Activated T-helper 1 cell treated with anti-CD3 and anti-CD28 coated beads, Interleukin-12 subunit alpha, Interleukin-12 subunit beta, Interleukin-2, Interleukin-4 antibody, amounts not matched to agents 30 ng/mL and 10 ng/mL and 1 ng/mL, durations not matched to agents 14 hours and 24 hours and 36 hours (primary cell): ENCODE measurements at regions of chr20 and their contacts with region 1.

Region 1: GRCh38 chr20:32509639-32510066 is 75.5 kb downstream of the NOL4L start:
- DNase-seq: no peak
- H3K4me3 Mint-ChIP-seq: peak overlapping the region; percentile 34
- H3K27ac Mint-ChIP-seq: peak overlapping the region; percentile 68
- H3K4me1 Mint-ChIP-seq: peaks cover 42% of the 10 kb centered on the region
- H3K27me3 Mint-ChIP-seq: no peaks in the 10 kb centered on the region

Region 2: GRCh38 chr20:32496811-32497533 is 12.7 kb before region 1 on chr20:
- intact Hi-C with region 1: loop called (anchors 1 kb)
- DNase-seq: no peak
- H3K4me3 Mint-ChIP-seq: no peak overlapping the region
- H3K27ac Mint-ChIP-seq: no peak overlapping the region
- H3K4me1 Mint-ChIP-seq: no peaks in the 10 kb centered on the region
- H3K27me3 Mint-ChIP-seq: no peaks in the 10 kb centered on the region